Caco-2 (cell line): ENCODE measurements at regions of chr10 and their contacts with region 1.

Region 1: GRCh38 chr10:67492317-67493019 is 203.5 kb downstream of the CTNNA3 start:
- DNase-seq: no peak
- H3K4me3 ChIP-seq: no peak overlapping the region
- H3K4me3 Mint-ChIP-seq: no peak overlapping the region
- H3K27ac Mint-ChIP-seq: peak overlapping the region; percentile 14
- H3K4me1 ChIP-seq: peaks cover 10% of the 10 kb centered on the region
- H3K4me1 Mint-ChIP-seq: peaks cover 17% of the 10 kb centered on the region
- H3K27me3 ChIP-seq: no peaks in the 10 kb centered on the region
- H3K27me3 Mint-ChIP-seq: no peaks in the 10 kb centered on the region
- CTCF ChIP-seq: no peak

Region 2: DNA sequence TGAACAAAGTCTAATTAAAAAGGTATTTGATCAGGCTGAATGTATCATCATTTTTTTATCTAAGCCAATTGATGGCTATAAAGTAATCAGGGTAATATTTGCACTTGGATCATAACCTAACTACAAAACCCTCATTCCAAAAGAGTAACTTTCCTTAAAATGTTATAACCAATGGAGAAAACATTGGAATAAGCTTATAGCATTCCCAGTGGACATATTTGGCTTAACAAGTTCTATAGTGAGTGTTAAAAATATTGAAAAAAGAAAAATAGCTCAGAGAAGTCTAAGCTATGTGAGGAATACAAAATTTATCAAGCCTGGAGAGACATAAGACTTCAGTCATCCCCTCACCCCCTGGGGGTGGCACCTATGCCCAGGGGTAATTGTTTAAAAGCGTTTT is 207.9 kb before region 1 on chr10:
- CTCF ChIA-PET with region 1: no interaction called
- POLR2A ChIA-PET with region 1: no interaction called
- intact Hi-C with region 1: loop called (anchors 1 kb)
- DNase-seq: no peak
- H3K4me3 ChIP-seq: no peak overlapping the region
- H3K4me3 Mint-ChIP-seq: no peak overlapping the region
- H3K27ac Mint-ChIP-seq: no peak overlapping the region
- H3K4me1 ChIP-seq: peaks cover 46% of the 10 kb centered on the region
- H3K4me1 Mint-ChIP-seq: peaks cover 36% of the 10 kb centered on the region
- H3K27me3 ChIP-seq: no peaks in the 10 kb centered on the region
- H3K27me3 Mint-ChIP-seq: no peaks in the 10 kb centered on the region
- CTCF ChIP-seq: peak in 1 of 2 experiments; percentile 21

Region 3: DNA sequence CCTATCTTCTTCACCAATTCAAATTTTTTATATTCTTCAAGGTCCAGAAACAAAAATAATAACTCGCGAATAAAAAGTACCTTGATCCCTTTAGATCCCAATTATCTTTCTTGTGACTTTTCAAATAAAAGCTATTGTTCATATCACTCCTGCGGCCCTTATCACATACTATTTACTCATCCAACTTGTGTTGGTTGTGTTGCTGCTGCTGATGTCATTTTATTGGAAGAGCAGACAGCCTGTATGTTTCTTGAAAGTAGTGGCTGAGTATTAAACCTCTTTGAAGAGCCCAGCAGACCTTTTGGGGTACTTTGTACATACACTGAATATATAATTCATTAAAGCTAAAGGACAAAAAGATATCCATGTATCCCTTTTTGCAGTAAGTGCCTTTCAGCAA is 28.2 kb before region 1 on chr10:
- CTCF ChIA-PET with region 1: no interaction called
- POLR2A ChIA-PET with region 1: no interaction called
- intact Hi-C with region 1: loop called (anchors 1 kb)
- DNase-seq: no peak
- H3K4me3 ChIP-seq: no peak overlapping the region
- H3K4me3 Mint-ChIP-seq: no peak overlapping the region
- H3K27ac Mint-ChIP-seq: no peak overlapping the region
- H3K4me1 ChIP-seq: no peaks in the 10 kb centered on the region
- H3K4me1 Mint-ChIP-seq: no peaks in the 10 kb centered on the region
- H3K27me3 ChIP-seq: no peaks in the 10 kb centered on the region
- H3K27me3 Mint-ChIP-seq: no peaks in the 10 kb centered on the region
- CTCF ChIP-seq: no peak